ENCODE measurements at regions of chr15 and their contacts with region 1.

Region 1: GRCh38 chr15:72473614-72474465 is at the start of gene ARIH1:
- DNase-seq: peak; percentile 93 to 98 (median 97)
- ATAC-seq: peak; percentile 91
- H3K4me3 ChIP-seq: peak within 1 kb of the TSS; percentile 95
- H3K4me3 Mint-ChIP-seq: peak within 1 kb of the TSS; percentile 92 to 98 (median 96)
- H3K27ac ChIP-seq: peak within 1 kb of the TSS; percentile 99
- H3K27ac Mint-ChIP-seq: peak within 1 kb of the TSS; percentile 87 to 100 (median 99)
- H3K4me1 ChIP-seq: peaks cover 38 to 39% of the 10 kb centered on the region in 2 donors
- H3K4me1 Mint-ChIP-seq: peaks cover 35 to 59% (median 47%) of the 10 kb centered on the region in 7 donors
- H3K27me3 ChIP-seq: no peaks in the 10 kb centered on the region
- H3K27me3 Mint-ChIP-seq: no peaks in the 10 kb centered on the region
- total RNA-seq, gene ARIH1: 128 to 191 (median 181) TPM

Region 2: DNA sequence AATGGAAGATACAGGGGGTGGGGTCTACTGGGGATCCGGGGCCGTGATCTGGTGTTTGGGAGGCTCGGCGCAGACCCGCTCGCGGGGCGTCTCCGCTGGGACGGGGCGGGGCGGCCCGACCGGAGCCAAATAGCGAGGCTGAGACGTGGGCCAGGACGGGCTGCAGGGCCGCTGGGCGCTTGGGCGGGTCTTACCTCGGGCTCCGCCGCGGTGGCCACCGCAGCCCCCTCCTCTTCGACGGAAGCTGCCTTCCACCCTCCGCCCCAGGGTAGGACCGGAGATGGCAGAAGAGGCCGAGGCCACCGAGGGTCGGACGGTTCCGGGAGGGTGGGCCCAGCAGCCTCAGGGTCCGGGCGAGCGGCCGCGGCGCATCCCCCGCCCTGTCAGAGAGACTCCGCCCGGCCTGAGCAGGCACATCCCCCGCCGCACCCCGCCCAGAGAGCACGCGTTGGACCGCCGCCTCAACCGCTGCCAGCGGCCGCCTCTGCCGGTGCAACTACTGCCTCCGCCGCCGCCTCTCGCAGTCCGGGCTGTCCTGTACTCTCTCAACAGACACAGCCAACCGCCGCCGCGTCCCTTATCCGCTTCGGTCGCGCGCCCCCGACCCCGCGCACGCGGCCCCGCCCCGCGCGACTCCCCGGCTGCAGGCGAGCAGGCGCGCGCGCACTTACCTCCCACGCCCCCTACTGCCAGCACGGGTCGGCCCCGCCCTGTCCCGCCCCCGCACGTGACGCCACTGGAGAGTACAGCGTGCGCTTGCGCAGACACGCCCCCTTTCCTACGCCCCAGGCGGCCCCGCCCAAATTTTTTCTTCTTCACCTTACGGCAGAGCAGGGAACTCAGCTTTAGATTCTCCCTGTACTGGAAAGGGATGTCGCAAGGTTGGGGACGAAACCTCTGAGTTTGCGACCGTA is 356.1 kb before region 1 on chr15 and contains the start of gene MYO9A:
- CTCF ChIA-PET with region 1: no interaction called
- POLR2A ChIA-PET with region 1: no interaction called
- intact Hi-C with region 1: loop called (anchors 1 kb)
- DNase-seq: peak; percentile 93 to 99 (median 98)
- ATAC-seq: peak; percentile 90
- H3K4me3 ChIP-seq: peak within 1 kb of the TSS; percentile 86
- H3K4me3 Mint-ChIP-seq: peak within 1 kb of the TSS; percentile 89 to 99 (median 97)
- H3K27ac ChIP-seq: peak within 1 kb of the TSS; percentile 94
- H3K27ac Mint-ChIP-seq: peak within 1 kb of the TSS; percentile 81 to 99 (median 99)
- H3K4me1 ChIP-seq: peaks cover 7 to 11% of the 10 kb centered on the region in 2 donors
- H3K4me1 Mint-ChIP-seq: peaks cover 23 to 55% (median 47%) of the 10 kb centered on the region in 7 donors
- H3K27me3 ChIP-seq: no peaks in the 10 kb centered on the region
- H3K27me3 Mint-ChIP-seq: peaks cover 0 to 23% (median 0%) of the 10 kb centered on the region in 5 donors
- total RNA-seq, gene MYO9A: 21.6 to 53.3 (median 29.7) TPM

Region 3: DNA sequence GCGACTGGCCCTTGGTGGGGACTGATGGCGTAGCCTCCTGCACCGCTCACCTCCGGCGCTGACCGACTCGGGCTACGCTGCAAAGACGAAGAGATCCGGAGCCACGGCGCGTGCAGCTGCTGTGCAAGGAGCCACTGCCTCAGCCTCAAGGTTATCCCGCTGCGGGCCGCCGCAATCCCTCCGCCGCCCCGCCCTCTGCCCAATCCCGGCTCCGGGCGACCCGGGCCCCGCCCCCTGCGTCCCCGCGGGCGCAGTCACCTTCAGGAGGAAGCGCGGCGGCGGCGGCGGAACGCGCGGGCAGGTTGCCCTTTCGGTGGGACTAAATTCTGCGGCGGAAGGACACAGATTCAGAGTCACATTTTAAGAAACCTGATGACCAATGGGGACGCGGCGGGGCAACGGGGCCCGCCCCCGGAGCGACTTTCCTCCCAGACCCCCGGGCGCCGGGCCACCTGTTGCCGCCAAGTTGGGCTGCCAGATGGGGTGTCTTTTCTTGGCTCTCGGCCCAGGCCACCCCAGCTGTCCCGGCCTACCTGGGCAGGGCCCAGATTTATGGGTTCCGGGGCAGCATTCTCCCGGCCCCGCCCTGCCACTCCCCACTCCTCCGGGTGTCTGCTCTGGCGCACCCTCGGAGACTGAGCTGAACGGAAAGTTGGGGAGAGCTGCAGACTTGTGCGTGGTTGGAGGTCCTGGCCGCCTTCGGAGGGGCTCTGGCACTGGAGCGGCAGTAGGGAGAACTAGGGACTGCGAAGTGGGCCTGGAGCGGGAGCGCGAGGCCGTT is 242.6 kb before region 1 on chr15 and contains the start of gene PKM:
- CTCF ChIA-PET with region 1: interaction called, 4 read pairs
- POLR2A ChIA-PET with region 1: interaction called, 13 read pairs
- intact Hi-C with region 1: loop called (anchors 1 kb)
- DNase-seq: peak; percentile 82 to 99 (median 88)
- ATAC-seq: peak; percentile 65
- H3K4me3 ChIP-seq: peak within 1 kb of the TSS; percentile 73
- H3K4me3 Mint-ChIP-seq: peak within 1 kb of the TSS; percentile 95 to 100 (median 99)
- H3K27ac ChIP-seq: peak within 1 kb of the TSS; percentile 73
- H3K27ac Mint-ChIP-seq: peak within 1 kb of the TSS; percentile 89 to 99 (median 95)
- H3K4me1 ChIP-seq: peaks cover 34 to 39% of the 10 kb centered on the region in 2 donors
- H3K4me1 Mint-ChIP-seq: peaks cover 40 to 55% (median 50%) of the 10 kb centered on the region in 7 donors
- H3K27me3 ChIP-seq: no peaks in the 10 kb centered on the region
- H3K27me3 Mint-ChIP-seq: peaks cover 0 to 3% (median 0%) of the 10 kb centered on the region in 5 donors
- total RNA-seq, gene PKM: 237 to 1,627 (median 329) TPM

Region 4: DNA sequence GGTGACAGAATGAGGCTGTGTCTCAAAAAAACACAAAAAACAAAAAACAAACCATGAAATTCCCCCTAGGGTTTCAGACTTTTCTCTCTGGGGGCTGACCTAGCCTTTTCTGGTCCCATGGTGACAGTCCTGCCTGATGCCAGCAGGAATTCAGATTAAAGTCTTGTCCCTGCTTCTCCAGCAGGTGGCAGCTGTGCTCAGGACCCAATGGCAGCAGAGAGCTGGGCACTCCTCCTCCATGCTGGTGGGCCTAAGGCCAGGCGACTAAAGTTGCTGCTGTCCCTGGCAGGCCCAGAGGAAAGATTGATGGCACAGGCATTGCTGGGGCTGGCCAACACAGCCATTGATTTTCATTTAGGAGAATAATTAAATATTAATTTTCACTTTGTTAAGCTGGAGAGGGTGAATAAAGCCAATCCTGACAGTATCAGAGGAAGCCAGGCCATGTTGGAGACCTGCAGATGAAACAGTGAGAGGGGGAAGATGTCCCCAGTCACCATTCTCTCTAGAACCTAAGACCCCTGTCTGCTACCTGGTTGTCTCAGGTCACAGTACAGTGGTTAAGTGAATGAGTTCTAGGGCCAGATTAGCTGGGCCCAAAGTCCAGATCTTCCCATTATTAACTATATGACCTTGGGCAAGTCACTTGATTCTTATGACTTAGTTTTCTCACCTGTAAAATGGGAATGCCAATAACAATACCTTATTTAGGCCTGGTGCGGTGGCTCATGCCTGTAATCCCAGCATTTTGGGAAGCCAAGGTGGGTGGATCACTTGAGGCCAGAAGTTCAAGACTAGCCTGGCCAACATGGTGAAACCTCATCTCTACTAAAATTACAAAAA is 161.0 kb before region 1 on chr15:
- CTCF ChIA-PET with region 1: no interaction called
- POLR2A ChIA-PET with region 1: no interaction called
- intact Hi-C with region 1: loop called (anchors 2 to 10 kb)
- DNase-seq: peak; percentile 22 to 54 (median 43)
- ATAC-seq: peak; percentile 93
- H3K4me3 ChIP-seq: no peak overlapping the region
- H3K4me3 Mint-ChIP-seq: no peak overlapping the region
- H3K27ac ChIP-seq: no peak overlapping the region
- H3K27ac Mint-ChIP-seq: no peak overlapping the region
- H3K4me1 ChIP-seq: no peaks in the 10 kb centered on the region
- H3K4me1 Mint-ChIP-seq: peaks cover 0 to 2% (median 0%) of the 10 kb centered on the region in 7 donors
- H3K27me3 ChIP-seq: no peaks in the 10 kb centered on the region
- H3K27me3 Mint-ChIP-seq: peaks cover 0 to 7% (median 0%) of the 10 kb centered on the region in 5 donors

Region 5: GRCh38 chr15:72532991-72533601 is 59.3 kb after region 1 on chr15:
- CTCF ChIA-PET with region 1: interaction called, 3 read pairs
- POLR2A ChIA-PET with region 1: interaction called, 8 read pairs
- intact Hi-C with region 1: loop called (anchors 1 to 5 kb)
- DNase-seq: peak in 7 of 9 donors; percentile 6 to 41 (median 30)
- ATAC-seq: peak; percentile 47
- H3K4me3 ChIP-seq: no peak overlapping the region
- H3K4me3 Mint-ChIP-seq: peak overlapping the region in 1 of 10 donors; percentile 58
- H3K27ac ChIP-seq: no peak overlapping the region
- H3K27ac Mint-ChIP-seq: peak overlapping the region in 1 of 9 donors; percentile 41
- H3K4me1 ChIP-seq: peaks cover 0 to 31% of the 10 kb centered on the region in 2 donors
- H3K4me1 Mint-ChIP-seq: peaks cover 27 to 87% (median 70%) of the 10 kb centered on the region in 7 donors
- H3K27me3 ChIP-seq: no peaks in the 10 kb centered on the region
- H3K27me3 Mint-ChIP-seq: no peaks in the 10 kb centered on the region

Region 6: GRCh38 chr15:72685925-72686794 is 212.3 kb after region 1 on chr15 and contains the starts of genes BBS4 and HIGD2B:
- CTCF ChIA-PET with region 1: no interaction called
- POLR2A ChIA-PET with region 1: interaction called, 4 read pairs
- intact Hi-C with region 1: loop called (anchors 1 to 5 kb)
- DNase-seq: peak; percentile 67 to 88 (median 84)
- ATAC-seq: peak; percentile 97
- H3K4me3 ChIP-seq: peak within 1 kb of the TSS; percentile 99
- H3K4me3 Mint-ChIP-seq: peak within 1 kb of the TSS; percentile 93 to 99 (median 98)
- H3K27ac ChIP-seq: peak within 1 kb of the TSS; percentile 82
- H3K27ac Mint-ChIP-seq: peak within 1 kb of the TSS; percentile 91 to 98 (median 96)
- H3K4me1 ChIP-seq: peaks cover 0 to 5% of the 10 kb centered on the region in 2 donors
- H3K4me1 Mint-ChIP-seq: peaks cover 8 to 25% (median 20%) of the 10 kb centered on the region in 7 donors
- H3K27me3 ChIP-seq: no peaks in the 10 kb centered on the region
- H3K27me3 Mint-ChIP-seq: peaks cover 0 to under 1% (median 0%) of the 10 kb centered on the region in 5 donors
- total RNA-seq, gene BBS4: 11.9 to 26.5 (median 16.2) TPM
- total RNA-seq, gene HIGD2B: 0.57 to 0.69 (median 0.64) TPM in 3 of 5 experiments, not detected in the others

Region 7: GRCh38 chr15:73633111-73633990 is 1159.5 kb after region 1 on chr15 and contains the start of gene NPTN:
- CTCF ChIA-PET with region 1: no interaction called
- POLR2A ChIA-PET with region 1: no interaction called
- intact Hi-C with region 1: loop called in 1 of 2 experiments (anchors 2 kb)
- DNase-seq: peak; percentile 96 to 99 (median 97)
- ATAC-seq: peak; percentile 95
- H3K4me3 ChIP-seq: peak within 1 kb of the TSS; percentile 73
- H3K4me3 Mint-ChIP-seq: peak within 1 kb of the TSS; percentile 79 to 97 (median 90)
- H3K27ac ChIP-seq: peak within 1 kb of the TSS; percentile 74
- H3K27ac Mint-ChIP-seq: peak within 1 kb of the TSS; percentile 71 to 96 (median 85)
- H3K4me1 ChIP-seq: peaks cover 16 to 26% of the 10 kb centered on the region in 2 donors
- H3K4me1 Mint-ChIP-seq: peaks cover 33 to 59% (median 49%) of the 10 kb centered on the region in 7 donors
- H3K27me3 ChIP-seq: no peaks in the 10 kb centered on the region
- H3K27me3 Mint-ChIP-seq: peaks cover 5 to 25% (median 8%) of the 10 kb centered on the region in 5 donors
- total RNA-seq, gene NPTN: 26.8 to 48.2 (median 42.6) TPM